ENCODE measurements at regions of chr5 and their contacts with region 1.

Region 1: GRCh38 chr5:79612667-79613198 is 492 bp downstream of the TENT2 start:
- DNase-seq: peak; percentile 51
- H3K4me3 Mint-ChIP-seq: peak overlapping the region; percentile 97
- H3K27ac Mint-ChIP-seq: peak overlapping the region; percentile 98
- H3K4me1 Mint-ChIP-seq: peaks cover 37% of the 10 kb centered on the region
- H3K27me3 Mint-ChIP-seq: no peaks in the 10 kb centered on the region

Region 2: GRCh38 chr5:79514391-79515105 is 98.2 kb before region 1 on chr5:
- CTCF ChIA-PET with region 1: no interaction called
- intact Hi-C with region 1: loop called (anchors 2 kb)
- DNase-seq: peak; percentile 91
- H3K4me3 Mint-ChIP-seq: peak overlapping the region; percentile 96
- H3K27ac Mint-ChIP-seq: peak overlapping the region; percentile 93
- H3K4me1 Mint-ChIP-seq: peaks cover 33% of the 10 kb centered on the region
- H3K27me3 Mint-ChIP-seq: peaks cover 19% of the 10 kb centered on the region

Region 3: GRCh38 chr5:79736528-79737514 is 124.1 kb after region 1 on chr5:
- CTCF ChIA-PET with region 1: no interaction called
- intact Hi-C with region 1: loop called (anchors 2 kb)
- DNase-seq: peak; percentile 28
- H3K4me3 Mint-ChIP-seq: peak overlapping the region; percentile 50
- H3K27ac Mint-ChIP-seq: peak overlapping the region; percentile 58
- H3K4me1 Mint-ChIP-seq: peaks cover 60% of the 10 kb centered on the region
- H3K27me3 Mint-ChIP-seq: peaks cover 31% of the 10 kb centered on the region

Region 4: DNA sequence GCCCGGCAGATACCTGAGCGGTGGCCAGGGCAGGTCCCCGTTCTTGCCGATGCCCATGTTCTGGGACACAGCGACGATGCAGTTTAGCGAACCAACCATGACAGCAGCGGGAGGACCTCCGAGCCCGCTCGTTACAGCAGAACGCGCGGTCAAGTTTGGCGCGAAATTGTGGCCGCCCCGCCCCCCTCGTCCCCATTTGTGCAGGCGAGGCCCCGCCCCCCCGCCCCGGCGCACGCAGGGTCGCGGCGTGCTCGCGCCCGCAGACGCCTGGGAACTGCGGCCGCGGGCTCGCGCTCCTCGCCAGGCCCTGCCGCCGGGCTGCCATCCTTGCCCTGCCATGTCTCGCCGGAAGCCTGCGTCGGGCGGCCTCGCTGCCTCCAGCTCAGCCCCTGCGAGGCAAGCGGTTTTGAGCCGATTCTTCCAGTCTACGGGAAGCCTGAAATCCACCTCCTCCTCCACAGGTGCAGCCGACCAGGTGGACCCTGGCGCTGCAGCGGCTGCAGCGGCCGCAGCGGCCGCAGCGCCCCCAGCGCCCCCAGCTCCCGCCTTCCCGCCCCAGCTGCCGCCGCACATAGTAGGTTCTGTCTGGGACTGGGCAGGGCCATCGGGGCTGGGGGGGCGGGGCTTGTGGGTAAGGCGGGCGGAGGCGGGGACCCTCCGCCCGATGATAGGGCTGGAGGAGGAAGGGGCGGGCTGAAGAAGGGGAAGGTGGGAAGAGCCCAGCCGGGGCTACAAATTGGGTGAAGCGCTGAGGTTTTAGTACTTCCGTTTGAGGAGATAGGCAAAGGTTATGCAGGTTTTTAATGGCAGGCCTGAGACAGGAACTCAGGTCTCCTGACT is 1041.9 kb after region 1 on chr5 and contains the starts of genes DHFR and MSH3:
- CTCF ChIA-PET with region 1: no interaction called
- intact Hi-C with region 1: loop called (anchors 10 kb)
- DNase-seq: peak; percentile 95
- H3K4me3 Mint-ChIP-seq: peak within 1 kb of the TSS; percentile 95
- H3K27ac Mint-ChIP-seq: peak within 1 kb of the TSS; percentile 99
- H3K4me1 Mint-ChIP-seq: peaks cover 25% of the 10 kb centered on the region
- H3K27me3 Mint-ChIP-seq: no peaks in the 10 kb centered on the region
- total RNA-seq, gene DHFR: 107 to 112 TPM
- total RNA-seq, gene MSH3: 25.1 to 25.8 TPM

Measured in activated naive CD4-positive, alpha-beta T cell treated with anti-CD3 and anti-CD28 coated beads for 36 hours (primary cell).